Breast epithelium (tissue), 4 donors: ENCODE measurements at regions of chr5 and their contacts with region 1.

Region 1: GRCh38 chr5:36606428-36607113 is at the start of gene SLC1A3:
- DNase-seq: peak in 1 of 2 donors; percentile 27
- H3K4me3 ChIP-seq: peak within 1 kb of the TSS; percentile 54 to 78 (median 54)
- H3K27ac ChIP-seq: peak within 1 kb of the TSS; percentile 6 to 71
- H3K4me1 ChIP-seq: peaks cover 0 to 4% of the 10 kb centered on the region in 2 donors
- H3K27me3 ChIP-seq: no peaks in the 10 kb centered on the region
- CTCF ChIP-seq: no peak
- POLR2A ChIP-seq: peak; percentile 41
- total RNA-seq, gene SLC1A3: 29.8 to 122 (median 87.5) TPM

Region 2: GRCh38 chr5:36363101-36363500 is 243.5 kb before region 1 on chr5:
- intact Hi-C with region 1: loop called (anchors 10 kb)
- DNase-seq: no peak
- H3K4me3 ChIP-seq: no peak overlapping the region
- H3K27ac ChIP-seq: no peak overlapping the region
- H3K4me1 ChIP-seq: no peaks in the 10 kb centered on the region
- H3K27me3 ChIP-seq: no peaks in the 10 kb centered on the region
- CTCF ChIP-seq: no peak
- POLR2A ChIP-seq: no peak

Region 3: DNA sequence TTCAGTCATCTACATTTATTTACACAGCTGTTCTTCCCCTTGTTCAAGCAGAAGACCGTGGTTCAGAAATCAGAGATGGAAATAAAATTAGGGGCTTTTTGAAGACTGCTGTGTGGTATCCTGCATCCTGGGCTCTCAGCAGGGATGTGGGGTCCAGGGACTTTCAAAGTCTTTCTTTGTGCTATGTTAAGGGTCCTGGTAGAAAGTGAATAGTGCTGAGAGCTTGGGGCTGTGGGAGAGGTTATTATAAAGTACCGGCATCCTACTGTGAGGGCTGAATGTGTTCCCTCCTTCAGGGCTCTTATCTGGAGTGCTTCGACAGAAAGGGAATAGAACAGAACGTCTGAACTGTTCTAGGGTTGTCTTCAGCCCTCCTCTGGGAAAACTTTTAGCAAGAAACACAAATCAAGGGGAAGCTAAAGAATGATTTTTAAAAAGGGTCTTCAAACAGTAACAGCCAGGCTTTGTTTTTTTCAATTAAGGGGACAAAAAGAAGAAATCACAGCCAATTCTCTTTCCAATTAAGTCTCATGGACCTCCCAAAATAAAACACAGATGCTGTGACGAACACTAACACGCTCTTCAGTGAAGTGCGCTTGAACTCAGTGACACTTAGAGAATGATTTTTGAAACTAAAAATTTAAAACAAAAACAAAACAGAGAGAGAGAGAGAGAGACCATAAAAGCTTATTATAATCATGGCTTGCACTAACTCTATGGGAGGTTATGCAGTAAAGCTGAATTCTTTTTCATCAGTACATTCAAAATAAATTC is 15.9 kb before region 1 on chr5:
- intact Hi-C with region 1: loop called (anchors 1 kb)
- DNase-seq: no peak
- H3K4me3 ChIP-seq: no peak overlapping the region
- H3K27ac ChIP-seq: no peak overlapping the region
- H3K4me1 ChIP-seq: no peaks in the 10 kb centered on the region
- H3K27me3 ChIP-seq: no peaks in the 10 kb centered on the region
- CTCF ChIP-seq: no peak
- POLR2A ChIP-seq: no peak